ENCODE measurements at regions of chr5 and their contacts with region 1.

Region 1: GRCh38 chr5:143106174-143106573 is 297.3 kb downstream of the NR3C1 start:
- DNase-seq: peak in 2 of 3 donors; percentile 38 to 76
- ATAC-seq: peak; percentile 76 to 83
- H3K4me3 ChIP-seq: no peak overlapping the region
- H3K27ac ChIP-seq: no peak overlapping the region
- H3K4me1 ChIP-seq: peaks cover 13% of the 10 kb centered on the region
- H3K27me3 ChIP-seq: no peaks in the 10 kb centered on the region

Region 2: DNA sequence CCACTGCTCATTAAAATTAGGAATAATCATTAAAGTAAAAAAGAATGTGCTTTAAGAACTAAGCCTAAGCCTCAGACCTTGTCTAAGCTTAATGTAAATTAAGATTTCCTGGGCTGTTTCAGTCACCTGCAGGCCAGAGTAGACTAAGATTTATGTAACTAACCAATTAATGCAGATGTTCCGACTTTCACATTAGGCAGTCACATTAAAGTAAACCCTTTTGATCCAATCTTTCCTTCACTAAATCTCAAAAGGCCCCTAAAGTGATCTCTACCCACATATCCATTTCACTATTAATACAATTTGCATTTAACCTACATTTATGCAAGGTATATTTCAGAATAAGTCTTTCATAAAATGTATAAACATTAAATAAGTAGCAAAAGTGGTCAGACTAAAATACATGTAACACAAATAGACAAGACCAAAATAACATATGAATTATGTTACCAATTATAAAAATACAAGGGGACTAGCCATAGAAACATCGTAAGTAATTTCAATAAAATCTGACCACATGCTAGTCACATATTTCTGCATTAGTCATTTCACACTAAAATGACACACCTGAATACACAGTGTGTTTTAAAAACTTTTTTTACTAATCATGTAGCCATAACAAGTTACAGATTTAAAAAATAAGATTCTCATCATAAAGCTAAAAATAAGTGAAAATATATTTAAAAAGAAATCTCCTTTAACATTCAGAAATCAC is 289.6 kb after region 1 on chr5:
- intact Hi-C with region 1: loop called in 1 of 4 experiments (anchors 10 kb)
- DNase-seq: no peak
- ATAC-seq: no peak
- H3K4me3 ChIP-seq: peak overlapping the region; percentile 31
- H3K27ac ChIP-seq: no peak overlapping the region
- H3K4me1 ChIP-seq: peaks cover 3% of the 10 kb centered on the region
- H3K27me3 ChIP-seq: no peaks in the 10 kb centered on the region

Measured in right cardiac atrium (tissue), 5 donors.